HepG2 (cell line): ENCODE measurements at regions of chr3 and their contacts with region 1.

Region 1: DNA sequence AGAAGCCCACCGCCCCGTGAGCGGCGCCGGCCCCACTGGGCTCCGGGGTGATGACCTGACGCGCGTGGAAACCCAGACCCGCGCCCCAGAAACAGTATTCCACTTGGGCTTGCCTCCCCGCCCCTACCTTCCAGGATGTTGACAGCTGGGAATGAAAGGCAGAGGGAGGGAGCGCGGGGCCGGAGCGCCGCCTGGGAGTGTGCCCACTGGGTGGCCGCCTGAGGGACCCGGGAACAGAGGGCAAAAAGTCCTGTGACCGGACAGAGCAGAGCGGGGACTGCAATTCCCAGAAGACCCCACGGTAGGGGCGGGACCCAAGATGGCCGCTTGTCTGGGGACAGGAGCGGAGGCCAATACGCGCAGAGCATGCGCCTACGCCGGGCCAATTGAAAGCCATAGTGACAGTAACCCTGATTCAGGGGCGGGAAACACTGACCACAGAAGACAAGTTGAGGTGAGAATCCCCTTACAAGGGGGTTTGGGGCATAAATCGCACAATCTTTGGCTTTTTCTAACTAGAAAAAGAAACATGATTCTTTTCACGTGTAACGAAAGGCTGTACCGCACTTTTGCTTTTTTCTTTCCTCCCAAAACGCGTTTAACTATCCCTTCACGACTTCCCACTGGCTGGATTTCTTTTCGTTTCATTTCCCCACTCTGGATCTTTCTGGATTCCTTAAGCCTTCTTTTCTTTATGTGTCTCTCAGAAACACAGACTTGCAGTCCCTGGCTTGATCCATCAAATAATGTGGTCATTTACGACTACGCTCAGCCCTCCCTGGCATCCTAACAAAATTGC is at the start of gene FHIT:
- DNase-seq: peak; percentile 94
- ATAC-seq: peak; percentile 97
- H3K4me3 ChIP-seq: peak within 1 kb of the TSS; percentile 67 to 88 (median 76)
- H3K27ac ChIP-seq: peak within 1 kb of the TSS; percentile 52
- H3K4me1 ChIP-seq: peaks cover 23% of the 10 kb centered on the region
- H3K27me3 ChIP-seq: no peaks in the 10 kb centered on the region
- CTCF ChIP-seq: peak; percentile 63
- EP300 ChIP-seq: no peak
- POLR2A ChIP-seq: peak; percentile 44 to 63; a peak in 3 of 4 replicates
- RAD21 ChIP-seq: peak; percentile 53
- total RNA-seq, gene FHIT: 4.0 and 4.1 TPM in 2 replicates

Region 2: GRCh38 chr3:60841363-60841762 is 410.0 kb before region 1 on chr3:
- CTCF ChIA-PET with region 1: no interaction called
- POLR2A ChIA-PET with region 1: no interaction called
- in situ Hi-C with region 1: no loop called
- intact Hi-C with region 1: loop called (anchors 5 kb)
- DNase-seq: peak; percentile 74
- ATAC-seq: peak; percentile 95
- H3K4me3 ChIP-seq: no peak overlapping the region
- H3K27ac ChIP-seq: no peak overlapping the region
- H3K4me1 ChIP-seq: peaks cover 8% of the 10 kb centered on the region
- H3K27me3 ChIP-seq: peaks cover 0 to 6% of the 10 kb centered on the region in 2 experiments; a peak in 1 of 5 replicates
- CTCF ChIP-seq: peak; percentile 26; the same call in 1 of the 2 replicates
- EP300 ChIP-seq: peak; percentile 78 to 80; a peak in 3 of 4 replicates
- POLR2A ChIP-seq: no peak
- RAD21 ChIP-seq: no peak

Region 3: DNA sequence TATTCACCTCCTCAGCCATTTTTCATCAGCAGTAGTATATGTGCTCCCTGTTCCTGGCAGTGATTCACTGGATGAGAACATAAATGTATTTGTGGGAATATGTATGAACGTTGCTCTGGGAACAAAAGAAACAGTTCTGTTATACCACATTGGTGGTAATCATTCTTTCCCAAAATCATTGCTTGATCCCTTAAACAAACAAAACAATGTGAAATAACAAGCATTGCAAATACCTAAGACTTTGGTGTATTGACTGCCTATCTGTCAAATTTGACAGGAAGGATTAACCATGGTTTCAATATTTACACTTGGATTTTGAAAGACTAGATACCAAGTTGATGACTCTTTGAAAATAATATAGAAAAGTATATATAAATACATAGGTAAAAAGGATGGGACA is 284.2 kb before region 1 on chr3:
- CTCF ChIA-PET with region 1: no interaction called
- POLR2A ChIA-PET with region 1: no interaction called
- in situ Hi-C with region 1: no loop called
- intact Hi-C with region 1: loop called (anchors 10 kb)
- DNase-seq: peak; percentile 82
- ATAC-seq: peak; percentile 94
- H3K4me3 ChIP-seq: no peak overlapping the region
- H3K27ac ChIP-seq: no peak overlapping the region
- H3K4me1 ChIP-seq: peaks cover 16% of the 10 kb centered on the region
- H3K27me3 ChIP-seq: no peaks in the 10 kb centered on the region; a peak in 1 of 5 replicates
- CTCF ChIP-seq: no peak
- EP300 ChIP-seq: peak; percentile 90 to 95; a peak in 3 of 4 replicates
- POLR2A ChIP-seq: no peak
- RAD21 ChIP-seq: no peak

Region 4: DNA sequence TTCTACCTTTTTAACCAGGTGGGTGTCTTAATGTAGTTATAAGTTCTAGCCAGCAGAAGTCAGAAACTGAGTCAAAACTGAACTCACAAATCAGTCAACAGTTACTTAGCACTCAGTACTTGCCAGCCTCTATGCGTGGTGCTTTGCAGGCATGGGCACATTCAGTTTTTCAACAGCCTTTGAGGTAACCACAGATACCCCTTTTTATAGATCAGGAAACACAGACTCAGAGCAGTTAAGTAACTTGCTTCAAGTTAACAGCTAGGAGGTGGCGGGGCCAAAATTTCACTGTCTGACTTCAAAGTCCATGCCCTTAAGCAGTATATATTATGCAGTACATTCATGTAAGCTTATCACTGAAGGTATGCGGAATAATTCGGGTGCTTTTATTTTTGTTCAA is 139.5 kb before region 1 on chr3:
- CTCF ChIA-PET with region 1: no interaction called
- POLR2A ChIA-PET with region 1: no interaction called
- in situ Hi-C with region 1: no loop called
- intact Hi-C with region 1: no loop called
- DNase-seq: no peak
- ATAC-seq: no peak
- H3K4me3 ChIP-seq: no peak overlapping the region
- H3K27ac ChIP-seq: no peak overlapping the region
- H3K4me1 ChIP-seq: no peaks in the 10 kb centered on the region
- H3K27me3 ChIP-seq: no peaks in the 10 kb centered on the region
- CTCF ChIP-seq: no peak
- EP300 ChIP-seq: no peak
- POLR2A ChIP-seq: no peak
- RAD21 ChIP-seq: no peak